CD4-positive, alpha-beta memory T cell (primary cell): ENCODE measurements at regions of chr3 and their contacts with region 1.

Region 1: DNA sequence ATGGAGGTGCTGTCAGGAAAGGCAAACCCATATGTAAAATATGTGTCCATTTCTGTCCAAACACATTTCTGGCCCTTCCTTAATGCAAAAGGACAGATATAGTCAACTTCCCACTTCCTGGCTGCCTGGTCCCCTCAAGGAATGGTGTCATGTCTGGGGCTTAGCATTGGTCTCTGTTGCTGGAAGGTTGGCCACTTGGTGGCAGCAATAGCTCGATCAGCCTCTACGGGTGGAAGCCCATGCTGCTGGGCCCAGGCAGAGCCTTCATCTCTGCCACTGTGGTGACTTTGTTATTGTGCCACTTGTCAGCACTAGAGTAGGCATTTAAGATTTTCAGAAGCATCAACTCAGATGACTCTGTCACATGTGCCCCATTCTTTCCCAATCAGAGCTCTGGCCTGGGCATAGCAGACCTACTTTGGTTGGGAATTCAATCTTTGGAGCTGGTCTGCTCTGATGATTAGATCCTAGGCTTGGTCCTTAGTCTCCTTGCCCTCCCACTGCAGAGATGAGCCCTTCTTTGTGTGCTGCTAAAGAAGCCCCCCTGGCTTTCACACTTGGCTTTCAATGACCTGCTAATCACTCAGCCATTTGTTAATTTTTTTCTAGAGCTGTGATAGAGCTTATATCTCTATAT is 51.0 kb upstream of the SPSB4 start:
- DNase-seq: peak; percentile 24 to 50 (median 30)
- H3K4me3 ChIP-seq: no peak overlapping the region
- H3K4me3 Mint-ChIP-seq: no peak overlapping the region
- H3K27ac ChIP-seq: no peak overlapping the region
- H3K27ac Mint-ChIP-seq: no peak overlapping the region
- H3K4me1 ChIP-seq: no peaks in the 10 kb centered on the region
- H3K4me1 Mint-ChIP-seq: peaks cover 0 to 2% (median 0%) of the 10 kb centered on the region in 4 donors
- H3K27me3 ChIP-seq: no peaks in the 10 kb centered on the region
- H3K27me3 Mint-ChIP-seq: peaks cover 3 to 8% of the 10 kb centered on the region in 2 donors

Region 2: GRCh38 chr3:141011232-141011996 is 11.3 kb after region 1 on chr3:
- CTCF ChIA-PET with region 1: interaction called, 10 read pairs
- POLR2A ChIA-PET with region 1: no interaction called
- intact Hi-C with region 1: no loop called
- DNase-seq: peak; percentile 51 to 62 (median 58)
- H3K4me3 ChIP-seq: no peak overlapping the region
- H3K4me3 Mint-ChIP-seq: no peak overlapping the region
- H3K27ac ChIP-seq: no peak overlapping the region
- H3K27ac Mint-ChIP-seq: peak overlapping the region in 1 of 7 donors; percentile 60
- H3K4me1 ChIP-seq: no peaks in the 10 kb centered on the region
- H3K4me1 Mint-ChIP-seq: peaks cover 1 to 4% (median 4%) of the 10 kb centered on the region in 4 donors
- H3K27me3 ChIP-seq: no peaks in the 10 kb centered on the region
- H3K27me3 Mint-ChIP-seq: peaks cover 9 to 19% of the 10 kb centered on the region in 2 donors